ENCODE measurements at regions of chr6 and their contacts with region 1.

Region 1: GRCh38 chr6:29676981-29677601 is 3.9 kb downstream of the ZFP57 start:
- DNase-seq: no peak
- H3K4me3 ChIP-seq: no peak overlapping the region
- H3K27ac ChIP-seq: 0 out of 2 replicates have a peak overlapping the region, but pooled peaks have one; percentile 19
- H3K4me1 ChIP-seq: peaks cover 0 to 3% (median 0%) of the 10 kb centered on the region in 4 experiments; a peak in 1 of 7 replicates
- H3K27me3 ChIP-seq: no peaks in the 10 kb centered on the region
- CTCF ChIP-seq: no peak
- EP300 ChIP-seq: no peak
- POLR2A ChIP-seq: no peak
- RAD21 ChIP-seq: no peak

Region 2: DNA sequence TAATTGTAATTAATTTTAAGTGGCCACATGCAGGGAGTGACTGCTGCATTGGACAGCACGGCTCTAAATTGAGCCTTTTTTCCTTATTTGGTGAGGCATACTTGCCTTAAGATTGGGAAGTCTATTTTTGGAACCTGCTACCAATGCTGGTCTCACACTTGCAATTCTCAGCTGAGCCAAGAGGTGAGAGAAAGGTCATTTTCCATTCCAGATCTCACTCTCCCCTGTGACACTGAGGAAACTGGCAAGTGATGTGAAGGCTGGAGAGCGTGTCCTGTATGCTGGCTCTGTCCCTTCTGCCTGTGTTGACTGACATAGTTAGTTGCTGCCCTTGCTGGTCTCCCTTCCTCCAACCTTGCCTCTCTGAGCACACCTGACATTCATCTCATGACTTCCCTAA is 20.9 kb before region 1 on chr6:
- CTCF ChIA-PET with region 1: interaction called, 502 read pairs
- POLR2A ChIA-PET with region 1: interaction called, 20 read pairs
- DNase-seq: no peak
- H3K4me3 ChIP-seq: no peak overlapping the region
- H3K27ac ChIP-seq: no peak overlapping the region
- H3K4me1 ChIP-seq: peaks cover 4 to 13% (median 11%) of the 10 kb centered on the region in 4 experiments
- H3K27me3 ChIP-seq: no peaks in the 10 kb centered on the region
- CTCF ChIP-seq: no peak
- EP300 ChIP-seq: no peak
- POLR2A ChIP-seq: no peak
- RAD21 ChIP-seq: no peak

Measured in H1 (cell line).